Heart right ventricle (tissue), 16 donors: ENCODE measurements at regions of chr9 and their contacts with region 1.

Region 1: DNA sequence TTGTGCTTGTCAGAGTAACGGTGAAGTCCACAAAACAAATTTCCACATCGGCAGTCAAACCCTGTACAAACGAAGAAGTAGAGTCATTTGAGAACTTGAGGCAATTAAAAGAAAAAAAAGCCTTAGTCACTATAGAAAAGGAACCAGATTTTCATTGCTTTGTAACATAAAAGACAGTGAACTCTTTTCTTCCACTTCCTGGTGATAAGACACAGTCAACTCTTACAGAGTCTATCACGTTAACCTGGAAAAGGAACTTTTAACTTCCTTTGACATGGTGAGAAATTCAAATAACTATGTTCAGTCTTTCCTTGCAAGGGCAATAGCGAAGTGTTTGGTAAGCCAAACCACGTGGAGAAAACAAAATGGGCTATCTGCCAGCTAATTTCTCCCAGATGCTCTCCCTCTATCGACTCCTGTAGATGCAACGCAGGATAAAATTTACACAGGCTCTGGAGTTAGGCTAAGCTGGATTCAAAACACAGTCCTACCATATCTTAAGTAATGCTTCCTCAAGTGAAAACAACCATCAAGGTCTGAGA is 8.9 kb downstream of the ZFAND5 start:
- DNase-seq: no peak
- ATAC-seq: peak in 2 of 8 donors; percentile 1 to 40
- H3K4me3 ChIP-seq: no peak overlapping the region
- H3K27ac ChIP-seq: peak overlapping the region in 3 of 10 donors; percentile 16 to 57 (median 22)
- H3K4me1 ChIP-seq: peaks cover 17 to 84% (median 65%) of the 10 kb centered on the region in 9 donors
- H3K27me3 ChIP-seq: no peaks in the 10 kb centered on the region
- CTCF ChIP-seq: no peak

Region 2: GRCh38 chr9:71128796-71129195 is 1227.3 kb before region 1 on chr9:
- intact Hi-C with region 1: no loop called
- DNase-seq: no peak
- ATAC-seq: no peak
- H3K4me3 ChIP-seq: no peak overlapping the region
- H3K27ac ChIP-seq: no peak overlapping the region
- H3K4me1 ChIP-seq: no peaks in the 10 kb centered on the region
- H3K27me3 ChIP-seq: peaks cover 0 to 12% (median 0%) of the 10 kb centered on the region in 7 donors
- CTCF ChIP-seq: no peak

Region 3: DNA sequence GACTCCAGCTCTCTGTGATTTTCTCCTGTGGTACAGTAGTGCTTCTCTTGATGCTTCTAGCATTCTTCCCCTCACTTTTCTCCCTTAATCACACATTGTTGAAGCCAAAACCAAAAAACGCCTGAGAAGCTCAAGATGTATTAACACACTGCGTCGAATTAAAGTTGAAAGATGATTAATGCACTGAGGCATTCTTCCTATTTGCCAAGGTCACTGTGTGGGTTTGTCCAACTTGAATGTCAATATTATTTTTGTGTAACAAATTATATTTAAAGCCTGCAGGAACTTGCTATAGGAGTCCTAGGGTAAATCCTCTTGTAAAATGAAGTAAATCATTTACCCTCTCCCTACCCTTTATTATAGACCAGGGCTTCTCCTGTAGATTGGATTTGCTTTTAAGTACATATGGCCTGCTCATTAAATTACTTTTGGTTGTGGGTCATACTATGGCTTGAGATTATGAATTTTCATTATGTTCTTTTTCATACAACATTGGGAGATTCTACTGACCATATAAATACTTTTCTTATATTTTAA is 138.7 kb before region 1 on chr9:
- intact Hi-C with region 1: no loop called
- DNase-seq: no peak
- ATAC-seq: no peak
- H3K4me3 ChIP-seq: no peak overlapping the region
- H3K27ac ChIP-seq: no peak overlapping the region
- H3K4me1 ChIP-seq: no peaks in the 10 kb centered on the region
- H3K27me3 ChIP-seq: no peaks in the 10 kb centered on the region
- CTCF ChIP-seq: no peak

Region 4: DNA sequence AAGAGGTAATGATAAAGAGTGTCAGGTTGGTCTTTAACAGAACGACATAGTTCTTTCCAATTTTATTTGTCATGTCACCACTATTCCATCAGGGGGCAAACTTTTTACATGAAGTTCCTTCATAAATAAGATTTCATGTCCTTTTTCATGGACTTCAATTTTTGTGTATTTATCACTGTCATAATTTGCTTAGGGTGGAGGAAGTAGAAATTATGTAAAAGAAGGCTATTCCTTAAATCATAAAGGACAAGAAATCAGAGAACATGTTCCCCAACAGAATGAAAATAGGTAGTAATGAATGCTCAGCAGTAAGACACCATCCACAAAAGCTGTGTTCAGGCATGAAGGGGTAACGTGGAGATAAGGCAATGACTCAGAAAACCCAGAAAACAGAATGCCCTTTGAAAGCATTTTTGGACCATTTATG is 63.8 kb before region 1 on chr9:
- intact Hi-C with region 1: loop called in 3 of 10 experiments (anchors 5 to 10 kb)
- DNase-seq: no peak
- ATAC-seq: peak in 3 of 8 donors; percentile 30 to 51 (median 44)
- H3K4me3 ChIP-seq: no peak overlapping the region
- H3K27ac ChIP-seq: peak overlapping the region in 1 of 10 donors; percentile 68
- H3K4me1 ChIP-seq: peaks cover 0 to 33% (median 8%) of the 10 kb centered on the region in 9 donors
- H3K27me3 ChIP-seq: no peaks in the 10 kb centered on the region
- CTCF ChIP-seq: peak; percentile 44 to 79 (median 65)

Region 5: GRCh38 chr9:72305102-72305546 is 51.0 kb before region 1 on chr9:
- intact Hi-C with region 1: loop called in 5 of 10 experiments (anchors 5 to 10 kb)
- DNase-seq: peak; percentile 78 to 91
- ATAC-seq: peak; percentile 97 to 100 (median 100)
- H3K4me3 ChIP-seq: peak overlapping the region in 7 of 10 donors; percentile 18 to 55 (median 51)
- H3K27ac ChIP-seq: peak overlapping the region in 9 of 10 donors; percentile 8 to 96 (median 87)
- H3K4me1 ChIP-seq: peaks cover 0 to 60% (median 6%) of the 10 kb centered on the region in 9 donors
- H3K27me3 ChIP-seq: no peaks in the 10 kb centered on the region
- CTCF ChIP-seq: no peak

Region 6: DNA sequence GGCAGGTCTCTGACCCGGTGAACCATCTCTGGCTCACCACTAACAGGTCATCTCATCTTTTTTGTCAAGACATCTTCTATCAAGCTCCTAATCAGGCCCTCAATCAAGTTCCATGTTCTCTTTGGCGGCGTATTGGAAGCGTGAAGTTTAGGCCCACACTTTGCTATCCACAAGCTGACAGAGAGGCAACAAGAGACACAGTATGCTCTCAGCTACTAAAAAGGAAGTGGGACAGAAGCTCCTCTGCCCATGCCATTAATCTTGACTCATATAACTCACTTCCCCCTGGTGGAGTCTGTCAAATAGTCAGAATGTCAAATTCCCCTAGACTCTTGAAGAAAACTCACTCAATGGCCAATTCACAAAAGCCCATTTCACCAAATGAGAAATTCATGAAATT is 87.7 kb after region 1 on chr9:
- intact Hi-C with region 1: no loop called
- DNase-seq: no peak
- ATAC-seq: peak in 4 of 8 donors; percentile 59 to 70 (median 61)
- H3K4me3 ChIP-seq: no peak overlapping the region
- H3K27ac ChIP-seq: peak overlapping the region in 1 of 10 donors; percentile 54
- H3K4me1 ChIP-seq: peaks cover 0 to 71% (median 0%) of the 10 kb centered on the region in 9 donors
- H3K27me3 ChIP-seq: no peaks in the 10 kb centered on the region
- CTCF ChIP-seq: peak in 1 of 9 donors; percentile 14

Region 7: GRCh38 chr9:72812559-72813111 is 456.5 kb after region 1 on chr9:
- intact Hi-C with region 1: loop called in 1 of 10 experiments (anchors 10 kb)
- DNase-seq: no peak
- ATAC-seq: peak in 4 of 8 donors; percentile 11 to 52 (median 26)
- H3K4me3 ChIP-seq: no peak overlapping the region
- H3K27ac ChIP-seq: no peak overlapping the region
- H3K4me1 ChIP-seq: no peaks in the 10 kb centered on the region
- H3K27me3 ChIP-seq: no peaks in the 10 kb centered on the region
- CTCF ChIP-seq: no peak